ENCODE measurements at regions of chr2 and their contacts with region 1.

Region 1: GRCh38 chr2:223674998-223675609 is 72.9 kb upstream of the SCG2 start:
- DNase-seq: peak; percentile 71
- H3K4me3 Mint-ChIP-seq: no peak overlapping the region
- H3K27ac Mint-ChIP-seq: peak overlapping the region; percentile 42
- H3K4me1 Mint-ChIP-seq: peaks cover 9% of the 10 kb centered on the region
- H3K27me3 Mint-ChIP-seq: no peaks in the 10 kb centered on the region
- CTCF ChIP-seq: peak; percentile 77

Region 2: GRCh38 chr2:223247136-223247535 is 428.0 kb before region 1 on chr2:
- CTCF ChIA-PET with region 1: interaction called, 3 read pairs
- POLR2A ChIA-PET with region 1: no interaction called
- intact Hi-C with region 1: loop called (anchors 5 kb)
- DNase-seq: peak; percentile 34
- H3K4me3 Mint-ChIP-seq: no peak overlapping the region
- H3K27ac Mint-ChIP-seq: no peak overlapping the region
- H3K4me1 Mint-ChIP-seq: no peaks in the 10 kb centered on the region
- H3K27me3 Mint-ChIP-seq: no peaks in the 10 kb centered on the region
- CTCF ChIP-seq: peak; percentile 43

Region 3: GRCh38 chr2:223727562-223727961 is 52.5 kb after region 1 on chr2:
- CTCF ChIA-PET with region 1: interaction called, 5 read pairs
- POLR2A ChIA-PET with region 1: no interaction called
- intact Hi-C with region 1: loop called (anchors 2 kb)
- DNase-seq: peak; percentile 80
- H3K4me3 Mint-ChIP-seq: no peak overlapping the region
- H3K27ac Mint-ChIP-seq: no peak overlapping the region
- H3K4me1 Mint-ChIP-seq: peaks cover 24% of the 10 kb centered on the region
- H3K27me3 Mint-ChIP-seq: no peaks in the 10 kb centered on the region
- CTCF ChIP-seq: peak; percentile 42

Region 4: GRCh38 chr2:223786943-223787342 is 111.8 kb after region 1 on chr2:
- CTCF ChIA-PET with region 1: no interaction called
- POLR2A ChIA-PET with region 1: no interaction called
- intact Hi-C with region 1: no loop called
- DNase-seq: no peak
- H3K4me3 Mint-ChIP-seq: no peak overlapping the region
- H3K27ac Mint-ChIP-seq: peak overlapping the region; percentile 18
- H3K4me1 Mint-ChIP-seq: no peaks in the 10 kb centered on the region
- H3K27me3 Mint-ChIP-seq: no peaks in the 10 kb centered on the region
- CTCF ChIP-seq: no peak

Region 5: GRCh38 chr2:223957092-223957851 is 282.2 kb after region 1 on chr2 and contains the start of gene MRPL44:
- CTCF ChIA-PET with region 1: no interaction called
- POLR2A ChIA-PET with region 1: no interaction called
- intact Hi-C with region 1: loop called (anchors 10 kb)
- DNase-seq: peak; percentile 95
- H3K4me3 Mint-ChIP-seq: peak within 1 kb of the TSS; percentile 92
- H3K27ac Mint-ChIP-seq: peak within 1 kb of the TSS; percentile 95
- H3K4me1 Mint-ChIP-seq: peaks cover 15% of the 10 kb centered on the region
- H3K27me3 Mint-ChIP-seq: no peaks in the 10 kb centered on the region
- CTCF ChIP-seq: no peak
- total RNA-seq, gene MRPL44: 27.4 and 31.2 TPM in 2 replicates

Measured in MCF 10A (cell line).